Endothelial cell of umbilical vein (primary cell): ENCODE measurements at regions of chr11 and their contacts with region 1.

Region 1: GRCh38 chr11:59106363-59107336 is at the start of gene FAM111B:
- DNase-seq: peak; percentile 91
- H3K4me3 ChIP-seq: peak within 1 kb of the TSS; percentile 44 to 74 (median 56)
- H3K27ac ChIP-seq: peak within 1 kb of the TSS; percentile 39
- H3K4me1 ChIP-seq: peaks cover 20% of the 10 kb centered on the region
- H3K27me3 ChIP-seq: peaks cover 0 to 3% of the 10 kb centered on the region in 2 experiments
- CTCF ChIP-seq: no peak
- POLR2A ChIP-seq: peak; percentile 29
- total RNA-seq, gene FAM111B: 17.4 and 21.9 TPM in 2 replicates

Region 2: DNA sequence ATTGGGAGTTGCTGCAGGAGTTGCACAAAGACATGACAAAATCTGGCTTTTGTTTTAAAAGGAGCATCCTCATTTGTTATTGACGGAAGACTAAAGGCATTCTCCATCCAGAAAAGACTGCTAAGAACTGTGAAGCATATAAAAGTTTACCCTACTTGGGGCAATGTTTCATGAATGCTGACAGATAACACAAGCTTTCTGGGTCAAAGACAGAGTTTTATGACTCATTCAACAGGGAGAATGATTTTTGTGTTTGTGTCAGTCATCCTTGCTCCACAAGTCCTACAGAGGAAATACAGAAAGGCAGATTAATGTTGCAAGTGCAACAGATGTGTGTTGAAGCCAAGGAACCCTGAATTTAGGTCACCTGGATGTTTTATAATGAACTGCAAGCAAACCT is 164.8 kb before region 1 on chr11:
- CTCF ChIA-PET with region 1: no interaction called
- POLR2A ChIA-PET with region 1: no interaction called
- dilution Hi-C with region 1: no loop called
- intact Hi-C with region 1: no loop called
- DNase-seq: no peak
- H3K4me3 ChIP-seq: no peak overlapping the region
- H3K27ac ChIP-seq: no peak overlapping the region
- H3K4me1 ChIP-seq: no peaks in the 10 kb centered on the region
- H3K27me3 ChIP-seq: no peaks in the 10 kb centered on the region
- CTCF ChIP-seq: no peak
- POLR2A ChIP-seq: no peak

Region 3: GRCh38 chr11:59053387-59053786 is 53.3 kb before region 1 on chr11:
- CTCF ChIA-PET with region 1: interaction called, 11 read pairs
- POLR2A ChIA-PET with region 1: interaction called, 5 read pairs
- dilution Hi-C with region 1: no loop called
- intact Hi-C with region 1: loop called (anchors 2 kb)
- DNase-seq: peak; percentile 59
- H3K4me3 ChIP-seq: no peak overlapping the region
- H3K27ac ChIP-seq: no peak overlapping the region
- H3K4me1 ChIP-seq: no peaks in the 10 kb centered on the region
- H3K27me3 ChIP-seq: peaks cover 2 to 4% of the 10 kb centered on the region in 2 experiments
- CTCF ChIP-seq: peak; percentile 69 to 74
- POLR2A ChIP-seq: no peak

Region 4: DNA sequence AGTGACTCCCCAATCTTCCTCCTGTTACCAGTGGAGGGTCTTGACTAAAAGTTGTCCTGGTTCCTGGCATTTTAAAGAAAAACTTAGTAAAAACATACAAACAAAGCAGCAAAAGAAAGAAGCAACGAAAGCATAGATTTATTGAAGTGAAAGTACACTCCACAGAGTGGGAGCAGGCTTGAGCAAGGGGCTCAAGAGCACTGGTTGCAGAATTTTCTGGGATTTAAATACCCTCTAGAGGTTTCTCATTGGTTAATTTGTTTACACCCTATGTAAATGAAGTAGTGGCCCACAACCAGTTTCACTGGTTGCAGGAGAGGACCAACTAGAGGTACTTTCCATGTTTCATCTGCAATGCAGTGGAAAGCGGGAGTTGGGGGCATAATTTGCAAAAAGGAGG is 11.1 kb after region 1 on chr11:
- CTCF ChIA-PET with region 1: interaction called, 3 read pairs
- POLR2A ChIA-PET with region 1: no interaction called
- dilution Hi-C with region 1: no loop called
- intact Hi-C with region 1: loop called (anchors 2 kb)
- DNase-seq: no peak
- H3K4me3 ChIP-seq: no peak overlapping the region
- H3K27ac ChIP-seq: no peak overlapping the region
- H3K4me1 ChIP-seq: no peaks in the 10 kb centered on the region
- H3K27me3 ChIP-seq: no peaks in the 10 kb centered on the region
- CTCF ChIP-seq: no peak
- POLR2A ChIP-seq: no peak

Region 5: DNA sequence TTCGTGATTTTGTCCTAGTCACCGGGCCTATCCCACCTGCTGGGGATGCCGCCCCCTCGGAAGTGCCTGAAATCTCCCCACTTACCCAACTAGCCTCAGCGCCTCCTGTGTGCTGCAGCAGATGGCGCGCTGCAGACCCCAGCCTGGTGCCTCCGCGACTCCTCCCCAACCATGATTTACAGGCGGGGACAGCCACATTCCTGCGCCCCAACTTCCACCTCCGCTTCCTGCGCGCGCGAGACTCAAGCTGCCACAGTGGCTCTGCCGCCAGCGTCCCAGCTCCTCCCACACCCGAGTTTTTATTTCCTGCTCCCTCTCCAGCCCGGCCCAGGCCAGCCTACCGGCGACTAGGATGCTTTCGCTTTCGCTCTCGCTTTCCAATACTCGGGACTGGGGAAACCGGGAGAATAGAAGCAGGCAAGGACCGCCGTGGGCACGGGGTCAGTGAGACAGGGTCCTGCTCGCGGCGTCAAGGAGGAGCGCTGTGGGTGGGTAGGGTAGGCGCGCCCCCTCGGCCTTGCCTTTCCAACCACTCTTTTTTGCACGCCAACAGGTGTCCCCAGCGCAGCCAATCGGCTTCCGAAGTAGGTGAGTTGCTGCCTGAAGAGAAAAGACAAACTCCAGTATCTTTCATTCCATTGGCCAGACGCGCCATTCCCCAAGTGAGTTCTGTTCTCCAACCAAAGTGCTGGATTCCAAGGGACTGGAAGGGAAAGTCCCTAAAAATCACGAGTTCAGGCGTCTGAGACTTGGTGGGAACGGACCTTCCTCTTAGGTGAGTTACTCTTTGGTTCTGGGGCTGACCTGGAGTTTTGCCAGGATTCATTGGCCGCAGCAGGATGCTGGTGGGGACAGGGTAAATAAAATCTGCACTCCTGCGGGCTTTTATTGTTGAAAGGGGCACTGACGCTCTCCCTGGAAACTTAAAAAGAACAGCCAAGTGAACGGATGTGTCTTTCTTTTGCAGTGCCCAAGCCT is 36.2 kb after region 1 on chr11 and contains the start of gene FAM111A:
- CTCF ChIA-PET with region 1: interaction called, 30 read pairs
- POLR2A ChIA-PET with region 1: interaction called, 6 read pairs
- dilution Hi-C with region 1: no loop called
- intact Hi-C with region 1: loop called (anchors 1 kb)
- DNase-seq: peak; percentile 91
- H3K4me3 ChIP-seq: peak within 1 kb of the TSS; percentile 69 to 90 (median 74)
- H3K27ac ChIP-seq: peak within 1 kb of the TSS; percentile 74
- H3K4me1 ChIP-seq: peaks cover 32% of the 10 kb centered on the region
- H3K27me3 ChIP-seq: no peaks in the 10 kb centered on the region
- CTCF ChIP-seq: peak; percentile 17 to 47
- POLR2A ChIP-seq: peak; percentile 66
- total RNA-seq, gene FAM111A: 53.0 and 57.4 TPM in 2 replicates